ENCODE measurements at regions of chr10 and their contacts with region 1.

Region 1: GRCh38 chr10:75401569-75402485 is at the start of gene ZNF503:
- DNase-seq: no peak
- ATAC-seq: peak; percentile 74
- H3K4me3 ChIP-seq: peak within 1 kb of the TSS; percentile 55
- H3K4me3 Mint-ChIP-seq: peak within 1 kb of the TSS; percentile 80 to 91 (median 86)
- H3K27ac ChIP-seq: no peak within 1 kb of the TSS
- H3K27ac Mint-ChIP-seq: peak within 1 kb of the TSS in 1 of 9 donors; percentile 50
- H3K4me1 ChIP-seq: peaks cover 6 to 15% of the 10 kb centered on the region in 2 donors
- H3K4me1 Mint-ChIP-seq: peaks cover 21 to 37% (median 34%) of the 10 kb centered on the region in 7 donors
- H3K27me3 ChIP-seq: peaks cover 0 to 5% of the 10 kb centered on the region in 2 donors
- H3K27me3 Mint-ChIP-seq: peaks cover 46 to 69% (median 52%) of the 10 kb centered on the region in 5 donors
- total RNA-seq, gene ZNF503: 0.07 to 3.6 (median 0.54) TPM in 4 of 5 experiments, not detected in the other

Region 2: GRCh38 chr10:75294866-75295701 is 106.7 kb before region 1 on chr10:
- CTCF ChIA-PET with region 1: no interaction called
- POLR2A ChIA-PET with region 1: no interaction called
- intact Hi-C with region 1: loop called in 1 of 2 experiments (anchors 5 kb)
- DNase-seq: peak; percentile 24 to 70 (median 58)
- ATAC-seq: peak; percentile 84
- H3K4me3 ChIP-seq: peak overlapping the region; percentile 59
- H3K4me3 Mint-ChIP-seq: peak overlapping the region in 5 of 10 donors; percentile 79 to 87 (median 84)
- H3K27ac ChIP-seq: peak overlapping the region; percentile 49
- H3K27ac Mint-ChIP-seq: peak overlapping the region in 4 of 9 donors; percentile 65 to 82 (median 74)
- H3K4me1 ChIP-seq: no peaks in the 10 kb centered on the region
- H3K4me1 Mint-ChIP-seq: peaks cover 0 to 4% (median 0%) of the 10 kb centered on the region in 7 donors
- H3K27me3 ChIP-seq: peaks cover 0 to 3% of the 10 kb centered on the region in 2 donors
- H3K27me3 Mint-ChIP-seq: peaks cover under 1 to 34% (median 6%) of the 10 kb centered on the region in 5 donors

Region 3: DNA sequence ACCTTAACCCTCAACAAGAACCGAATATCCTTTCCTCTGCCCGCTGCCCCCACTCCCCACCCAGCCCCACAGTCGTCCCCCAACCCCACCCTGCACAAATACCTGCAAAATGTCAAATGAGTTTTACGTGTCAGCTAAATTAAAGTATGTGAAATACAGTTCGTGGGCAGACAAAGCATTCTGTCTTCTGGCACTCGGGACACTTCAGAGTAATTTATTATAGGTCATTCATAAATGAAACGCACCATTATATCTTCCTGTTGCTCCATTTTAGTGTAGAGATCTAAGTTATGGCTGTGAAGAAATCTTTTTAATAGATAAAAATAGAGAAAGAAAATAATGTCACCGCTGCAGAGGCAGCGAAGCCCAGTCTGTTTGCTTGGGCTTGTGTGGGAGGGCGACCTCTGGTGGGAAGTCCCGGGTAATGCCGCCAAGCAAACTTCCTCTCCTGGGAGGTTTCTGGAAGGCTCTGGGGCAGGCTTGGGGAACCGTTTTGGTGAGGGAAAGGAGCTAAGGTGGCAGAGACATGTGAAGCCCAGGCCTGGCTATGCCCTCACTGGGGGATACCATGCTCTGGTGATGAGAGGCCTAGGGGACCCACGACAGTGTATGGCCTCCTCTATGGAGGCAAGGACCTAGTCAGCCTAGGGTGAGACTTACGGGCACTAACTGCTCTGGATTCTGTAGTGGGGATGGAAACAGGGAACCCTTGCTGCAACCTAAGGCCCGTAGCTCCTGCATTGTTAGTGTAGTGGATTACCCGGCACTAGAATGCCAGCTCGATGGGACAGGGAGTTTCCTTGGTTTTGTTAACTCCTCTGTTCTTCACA is 634.5 kb after region 1 on chr10:
- CTCF ChIA-PET with region 1: no interaction called
- POLR2A ChIA-PET with region 1: no interaction called
- intact Hi-C with region 1: loop called (anchors 2 to 5 kb)
- DNase-seq: peak in 6 of 9 donors; percentile 5 to 41 (median 14)
- ATAC-seq: peak; percentile 76
- H3K4me3 ChIP-seq: no peak overlapping the region
- H3K4me3 Mint-ChIP-seq: no peak overlapping the region
- H3K27ac ChIP-seq: no peak overlapping the region
- H3K27ac Mint-ChIP-seq: no peak overlapping the region
- H3K4me1 ChIP-seq: no peaks in the 10 kb centered on the region
- H3K4me1 Mint-ChIP-seq: peaks cover 0 to 3% (median 0%) of the 10 kb centered on the region in 7 donors
- H3K27me3 ChIP-seq: no peaks in the 10 kb centered on the region
- H3K27me3 Mint-ChIP-seq: peaks cover 0 to 20% (median 6%) of the 10 kb centered on the region in 5 donors

Region 4: DNA sequence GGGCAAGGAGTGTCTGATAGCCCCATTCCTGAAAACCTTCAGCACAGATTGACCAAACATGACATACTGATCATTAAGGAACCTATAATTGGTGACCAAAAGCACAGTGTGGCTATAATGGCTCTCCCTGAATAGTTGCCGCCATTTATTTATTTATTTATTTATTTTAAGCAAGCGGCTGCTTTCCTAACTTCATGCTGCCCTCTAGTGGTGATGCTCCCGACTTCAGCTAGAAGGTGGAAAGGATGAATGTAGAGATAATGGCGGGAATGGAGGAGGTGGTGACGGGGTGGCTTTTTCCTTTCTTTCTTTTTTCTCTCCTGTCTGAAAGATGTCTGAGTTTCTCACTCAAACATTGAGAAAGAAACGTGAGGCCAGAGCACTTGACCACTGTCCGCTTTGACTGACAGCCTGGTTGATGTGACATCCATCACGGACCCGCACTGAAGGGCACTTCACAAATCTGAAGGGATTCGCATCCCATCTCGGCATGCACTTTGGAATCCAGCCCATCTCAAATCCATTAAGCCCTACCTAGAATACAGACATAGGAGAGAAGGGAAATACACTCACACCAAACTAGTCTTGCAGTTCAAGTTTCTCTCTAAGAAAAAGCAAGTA is 1145.6 kb after region 1 on chr10:
- CTCF ChIA-PET with region 1: no interaction called
- POLR2A ChIA-PET with region 1: no interaction called
- intact Hi-C with region 1: loop called in 1 of 2 experiments (anchors 5 kb)
- DNase-seq: peak in 6 of 9 donors; percentile 5 to 52 (median 12)
- ATAC-seq: peak; percentile 51
- H3K4me3 ChIP-seq: no peak overlapping the region
- H3K4me3 Mint-ChIP-seq: no peak overlapping the region
- H3K27ac ChIP-seq: no peak overlapping the region
- H3K27ac Mint-ChIP-seq: no peak overlapping the region
- H3K4me1 ChIP-seq: no peaks in the 10 kb centered on the region
- H3K4me1 Mint-ChIP-seq: peaks cover 0 to 1% (median 0%) of the 10 kb centered on the region in 7 donors
- H3K27me3 ChIP-seq: no peaks in the 10 kb centered on the region
- H3K27me3 Mint-ChIP-seq: peaks cover 0 to 13% (median 7%) of the 10 kb centered on the region in 5 donors

Region 5: GRCh38 chr10:76984559-76985443 is 1583.0 kb after region 1 on chr10:
- CTCF ChIA-PET with region 1: interaction called, 3 read pairs
- POLR2A ChIA-PET with region 1: no interaction called
- intact Hi-C with region 1: loop called (anchors 10 kb)
- DNase-seq: peak; percentile 14 to 58 (median 51)
- ATAC-seq: peak; percentile 50
- H3K4me3 ChIP-seq: no peak overlapping the region
- H3K4me3 Mint-ChIP-seq: no peak overlapping the region
- H3K27ac ChIP-seq: no peak overlapping the region
- H3K27ac Mint-ChIP-seq: no peak overlapping the region
- H3K4me1 ChIP-seq: no peaks in the 10 kb centered on the region
- H3K4me1 Mint-ChIP-seq: no peaks in the 10 kb centered on the region
- H3K27me3 ChIP-seq: no peaks in the 10 kb centered on the region
- H3K27me3 Mint-ChIP-seq: peaks cover 0 to 11% (median 6%) of the 10 kb centered on the region in 5 donors

Region 6: DNA sequence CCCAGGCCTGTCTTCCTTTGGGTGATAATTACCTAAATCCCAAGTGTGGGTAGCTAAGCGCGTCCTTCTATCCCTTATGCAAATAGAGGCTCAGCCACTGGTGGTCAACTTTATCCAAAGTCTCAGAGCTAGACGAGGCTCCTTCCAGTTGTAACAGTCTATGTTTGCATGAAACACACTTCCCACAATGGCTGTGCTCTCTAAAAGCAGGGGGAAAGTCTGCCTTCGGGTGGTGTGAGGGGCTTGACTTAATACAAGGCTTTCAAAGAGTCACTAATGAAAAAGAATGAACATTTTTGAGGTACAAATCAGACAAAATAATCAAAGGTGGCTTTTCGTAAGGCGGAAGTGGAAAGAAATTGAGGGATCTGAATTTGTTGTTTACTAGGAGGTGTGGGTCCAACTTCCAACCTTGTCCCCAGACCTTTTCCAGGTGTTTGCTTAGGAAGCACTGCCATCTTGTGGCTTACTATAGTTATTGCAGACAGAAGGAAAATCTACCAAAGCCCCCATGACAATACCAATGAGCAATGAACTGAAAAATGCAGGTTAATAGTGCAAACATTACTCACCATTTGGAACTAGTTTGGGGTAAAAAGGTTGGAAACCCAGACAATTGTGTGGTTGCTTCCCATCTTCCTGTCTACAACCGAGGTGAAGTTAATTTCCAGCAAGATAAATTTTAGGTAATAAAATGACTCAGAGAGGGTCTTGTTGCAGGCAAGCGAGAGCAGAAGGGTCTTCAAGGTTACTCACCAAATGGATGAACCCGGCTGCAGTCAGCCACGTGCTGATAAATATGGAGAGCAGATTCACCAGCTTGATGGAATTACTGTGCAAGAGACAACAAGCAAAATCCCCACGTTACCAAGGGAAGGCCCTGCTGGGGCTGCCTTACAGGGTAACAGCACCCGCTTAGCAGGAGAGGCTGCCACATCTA is 1710.1 kb after region 1 on chr10:
- CTCF ChIA-PET with region 1: no interaction called
- POLR2A ChIA-PET with region 1: no interaction called
- intact Hi-C with region 1: loop called in 1 of 2 experiments (anchors 5 kb)
- DNase-seq: peak in 5 of 9 donors; percentile 12 to 39 (median 28)
- ATAC-seq: peak; percentile 57
- H3K4me3 ChIP-seq: no peak overlapping the region
- H3K4me3 Mint-ChIP-seq: no peak overlapping the region
- H3K27ac ChIP-seq: no peak overlapping the region
- H3K27ac Mint-ChIP-seq: no peak overlapping the region
- H3K4me1 ChIP-seq: no peaks in the 10 kb centered on the region
- H3K4me1 Mint-ChIP-seq: no peaks in the 10 kb centered on the region
- H3K27me3 ChIP-seq: no peaks in the 10 kb centered on the region
- H3K27me3 Mint-ChIP-seq: peaks cover 0 to 12% (median 0%) of the 10 kb centered on the region in 5 donors

Measured in naive thymus-derived CD4-positive, alpha-beta T cell (primary cell).